Cardiac septum (tissue), 1 donor: ENCODE measurements at regions of chr19 and their contacts with region 1.

Region 1: GRCh38 chr19:14517840-14518505 is at the start of gene DNAJB1:
- DNase-seq: peak; percentile 95
- total RNA-seq, gene DNAJB1: 61.6 TPM

Region 2: GRCh38 chr19:13905938-13906904 is 611.8 kb before region 1 on chr19 and contains the starts of genes BRME1 and CC2D1A:
- intact Hi-C with region 1: no loop called
- DNase-seq: peak; percentile 99
- total RNA-seq, gene BRME1: 0.35 TPM
- total RNA-seq, gene CC2D1A: 19.5 TPM

Region 3: DNA sequence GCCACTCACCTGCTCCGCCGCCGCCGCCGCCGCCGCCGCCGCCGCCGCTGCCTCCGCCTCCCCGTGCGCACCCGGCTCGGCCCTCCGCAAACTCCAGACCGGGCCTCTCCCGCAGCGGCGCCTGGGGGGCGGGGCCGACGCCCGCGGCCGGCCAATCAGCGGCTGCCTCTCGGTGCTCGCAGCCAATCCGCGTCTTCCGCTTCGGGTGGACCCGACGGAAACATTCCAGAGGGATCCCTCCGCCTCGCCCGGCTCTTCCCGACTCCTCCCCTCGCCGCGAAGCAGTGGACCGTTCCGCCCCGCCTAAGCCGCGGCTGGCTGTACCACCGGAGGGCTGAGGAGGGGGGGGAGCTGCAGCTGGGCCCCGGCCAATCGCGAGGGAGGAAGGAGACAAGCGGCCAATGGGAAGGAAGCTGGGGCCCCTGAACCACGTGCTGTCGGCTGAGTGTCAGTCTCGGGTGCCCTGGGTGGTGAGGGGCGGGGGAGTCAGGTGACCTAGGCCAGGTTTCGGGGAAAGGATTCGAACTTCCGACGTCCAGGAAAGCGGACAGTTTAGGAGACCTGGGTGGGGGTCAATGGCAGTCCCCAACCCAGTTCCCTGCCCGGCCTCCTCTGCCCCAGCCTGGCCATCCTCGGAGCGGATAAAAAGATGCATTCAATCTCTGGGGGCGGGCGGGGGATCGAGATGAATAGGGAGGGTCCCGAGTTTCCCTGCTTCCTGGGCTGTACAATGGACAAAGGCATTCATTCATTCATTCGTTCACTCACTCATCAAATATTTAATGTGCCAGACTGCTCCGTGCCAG is 21.7 kb before region 1 on chr19 and contains the start of gene GIPC1:
- intact Hi-C with region 1: loop called (anchors 1 kb)
- DNase-seq: peak; percentile 97
- total RNA-seq, gene GIPC1: 49.5 TPM